ENCODE measurements at regions of chr5 and their contacts with region 1.

Region 1: GRCh38 chr5:138824924-138825863 is 49.9 kb downstream of the LRRTM2 start:
- DNase-seq: no peak
- ATAC-seq: peak in 2 of 4 donors; percentile 61 to 67
- H3K4me3 ChIP-seq: no peak overlapping the region
- H3K27ac ChIP-seq: peak overlapping the region in 4 of 12 donors; percentile 18 to 45 (median 34)
- H3K4me1 ChIP-seq: peaks cover 4 to 54% (median 30%) of the 10 kb centered on the region in 12 donors
- H3K27me3 ChIP-seq: no peaks in the 10 kb centered on the region
- CTCF ChIP-seq: peak; percentile 45 to 73 (median 68)
- POLR2A ChIP-seq: no peak

Region 2: GRCh38 chr5:138775034-138775433 is 50.2 kb before region 1 on chr5:
- intact Hi-C with region 1: no loop called
- DNase-seq: no peak
- ATAC-seq: no peak
- H3K4me3 ChIP-seq: no peak overlapping the region
- H3K27ac ChIP-seq: no peak overlapping the region
- H3K4me1 ChIP-seq: peaks cover 0 to 58% (median 32%) of the 10 kb centered on the region in 12 donors
- H3K27me3 ChIP-seq: no peaks in the 10 kb centered on the region
- CTCF ChIP-seq: no peak
- POLR2A ChIP-seq: no peak

Region 3: GRCh38 chr5:138918686-138919085 is 93.5 kb after region 1 on chr5:
- intact Hi-C with region 1: loop called in 2 of 10 experiments (anchors 5 to 10 kb)
- DNase-seq: no peak
- ATAC-seq: peak in 1 of 4 donors; percentile 37
- H3K4me3 ChIP-seq: no peak overlapping the region
- H3K27ac ChIP-seq: no peak overlapping the region
- H3K4me1 ChIP-seq: peaks cover 0 to 27% (median 5%) of the 10 kb centered on the region in 12 donors
- H3K27me3 ChIP-seq: no peaks in the 10 kb centered on the region
- CTCF ChIP-seq: no peak
- POLR2A ChIP-seq: no peak

Region 4: GRCh38 chr5:138927979-138928378 is 102.8 kb after region 1 on chr5:
- intact Hi-C with region 1: loop called in 1 of 10 experiments (anchors 10 kb)
- DNase-seq: peak; percentile 79 to 92 (median 85)
- ATAC-seq: peak; percentile 89 to 94 (median 92)
- H3K4me3 ChIP-seq: no peak overlapping the region
- H3K27ac ChIP-seq: peak overlapping the region; percentile 48 to 87 (median 72)
- H3K4me1 ChIP-seq: peaks cover 0 to 35% (median 26%) of the 10 kb centered on the region in 12 donors
- H3K27me3 ChIP-seq: no peaks in the 10 kb centered on the region
- CTCF ChIP-seq: peak in 2 of 12 donors; percentile 7 to 13
- POLR2A ChIP-seq: no peak

Measured in heart left ventricle (tissue), 16 donors.